Activated B cell treated with CpG ODN at 0.5 μM for 24 hours (primary cell): ENCODE measurements at regions of chr16 and their contacts with region 1.

Region 1: GRCh38 chr16:70800781-70801530 is at the start of gene VAC14:
- DNase-seq: peak; percentile 98
- ATAC-seq: peak; percentile 97
- H3K4me3 Mint-ChIP-seq: peak within 1 kb of the TSS; percentile 92
- H3K27ac Mint-ChIP-seq: peak within 1 kb of the TSS; percentile 90
- H3K4me1 Mint-ChIP-seq: peaks cover 34% of the 10 kb centered on the region
- H3K27me3 Mint-ChIP-seq: peaks cover 2% of the 10 kb centered on the region
- CTCF ChIP-seq: no peak
- total RNA-seq, gene VAC14: 47.8 and 53.4 TPM in 2 replicates

Region 2: GRCh38 chr16:70737377-70738082 is 63.4 kb before region 1 on chr16:
- CTCF ChIA-PET with region 1: no interaction called
- POLR2A ChIA-PET with region 1: no interaction called
- intact Hi-C with region 1: loop called (anchors 2 kb)
- DNase-seq: peak; percentile 34
- ATAC-seq: peak; percentile 82
- H3K4me3 Mint-ChIP-seq: peak overlapping the region; percentile 36
- H3K27ac Mint-ChIP-seq: peak overlapping the region; percentile 79
- H3K4me1 Mint-ChIP-seq: peaks cover 25% of the 10 kb centered on the region
- H3K27me3 Mint-ChIP-seq: no peaks in the 10 kb centered on the region
- CTCF ChIP-seq: no peak

Region 3: GRCh38 chr16:70789226-70789926 is 11.6 kb before region 1 on chr16:
- CTCF ChIA-PET with region 1: no interaction called
- POLR2A ChIA-PET with region 1: no interaction called
- intact Hi-C with region 1: no loop called
- DNase-seq: no peak
- ATAC-seq: no peak
- H3K4me3 Mint-ChIP-seq: no peak overlapping the region
- H3K27ac Mint-ChIP-seq: no peak overlapping the region
- H3K4me1 Mint-ChIP-seq: peaks cover 17% of the 10 kb centered on the region
- H3K27me3 Mint-ChIP-seq: no peaks in the 10 kb centered on the region
- CTCF ChIP-seq: no peak

Region 4: GRCh38 chr16:71288890-71289733 is 488.2 kb after region 1 on chr16 and contains the start of gene CMTR2:
- CTCF ChIA-PET with region 1: no interaction called
- POLR2A ChIA-PET with region 1: interaction called, 4 read pairs
- intact Hi-C with region 1: loop called (anchors 1 kb)
- DNase-seq: peak; percentile 90
- ATAC-seq: peak; percentile 89
- H3K4me3 Mint-ChIP-seq: peak within 1 kb of the TSS; percentile 89
- H3K27ac Mint-ChIP-seq: peak within 1 kb of the TSS; percentile 94
- H3K4me1 Mint-ChIP-seq: peaks cover 29% of the 10 kb centered on the region
- H3K27me3 Mint-ChIP-seq: peaks cover 19% of the 10 kb centered on the region
- CTCF ChIP-seq: no peak
- total RNA-seq, gene CMTR2: 28.6 and 35.3 TPM in 2 replicates